ENCODE measurements at regions of chr10 and their contacts with region 1.

Region 1: GRCh38 chr10:123885406-123886170 is 6.0 kb downstream of the CPXM2 start:
- DNase-seq: peak; percentile 81

Region 2: GRCh38 chr10:123782026-123782425 is 103.6 kb before region 1 on chr10:
- intact Hi-C with region 1: loop called in 1 of 2 experiments (anchors 5 kb)
- DNase-seq: no peak